ENCODE measurements at regions of chr10 and their contacts with region 1.

Region 1: DNA sequence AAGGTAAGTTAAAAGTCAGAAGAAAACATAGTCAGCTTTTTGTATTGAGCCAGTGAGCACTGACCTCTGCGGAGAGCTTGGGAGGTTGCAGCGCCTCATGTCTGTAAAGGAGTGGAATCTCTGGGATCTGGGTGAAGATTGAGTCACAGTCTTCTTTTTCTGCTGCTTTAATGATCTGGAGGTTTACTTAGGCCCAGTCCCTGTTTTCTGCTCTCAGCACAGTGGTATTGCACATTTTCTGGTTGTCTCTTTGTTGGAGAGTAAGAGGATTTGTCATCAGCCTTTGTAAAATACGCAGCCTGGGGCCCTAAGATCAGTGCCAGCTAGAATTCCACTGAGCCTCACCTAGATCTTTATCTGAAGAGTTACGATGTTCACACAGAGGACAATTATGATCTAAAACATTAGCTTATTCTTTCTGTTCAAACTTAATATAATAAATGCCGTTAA is 58.3 kb upstream of the GJD4 start:
- DNase-seq: peak; percentile 100
- ATAC-seq: peak; percentile 93
- H3K4me3 ChIP-seq: peak overlapping the region; percentile 31
- H3K27ac ChIP-seq: peak overlapping the region; percentile 86
- H3K4me1 ChIP-seq: peaks cover 42% of the 10 kb centered on the region
- H3K27me3 ChIP-seq: no peaks in the 10 kb centered on the region
- CTCF ChIP-seq: peak; percentile 78

Region 2: DNA sequence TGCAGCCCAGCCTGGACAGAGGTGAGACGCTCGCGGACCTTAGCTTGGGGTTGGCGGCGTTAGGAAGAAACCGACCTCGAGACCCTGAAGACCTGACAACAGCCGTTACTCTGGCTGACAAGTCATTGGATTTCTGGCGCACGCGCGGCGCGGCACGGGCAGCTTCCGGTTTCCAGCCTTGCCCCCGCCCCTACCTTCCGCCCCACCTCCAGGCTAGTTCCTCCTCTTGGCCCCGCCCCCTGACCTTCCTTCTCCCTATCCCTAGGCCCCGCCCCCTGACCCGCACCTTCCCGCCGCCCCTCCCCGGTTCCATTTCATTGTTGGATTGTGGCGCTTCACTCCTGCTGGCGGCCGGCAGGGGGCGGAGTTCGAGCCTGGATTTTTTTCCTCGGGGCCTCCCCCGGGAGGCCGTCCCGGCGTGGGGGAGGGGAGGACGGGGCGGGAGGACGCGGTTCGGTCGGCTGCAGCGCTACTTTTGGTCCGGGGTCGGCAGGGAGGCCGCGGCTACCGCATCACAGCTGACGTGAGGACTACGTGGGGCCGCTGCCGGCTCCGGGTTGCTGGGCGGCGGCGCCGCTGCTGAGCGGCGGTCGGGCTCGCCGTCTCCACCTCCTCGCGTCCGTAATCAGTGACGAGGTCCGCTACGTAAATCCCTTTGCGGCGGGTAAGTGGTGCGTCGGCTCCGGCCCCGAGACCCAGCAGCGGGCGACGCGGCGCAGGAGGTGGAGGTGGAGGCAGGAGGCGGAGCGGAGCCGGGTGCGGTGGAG is 420.1 kb before region 1 on chr10 and contains the start of gene CREM:
- CTCF ChIA-PET with region 1: interaction called, 5 read pairs
- POLR2A ChIA-PET with region 1: no interaction called
- intact Hi-C with region 1: loop called (anchors 5 kb)
- DNase-seq: peak; percentile 100
- ATAC-seq: peak; percentile 80
- H3K4me3 ChIP-seq: peak within 1 kb of the TSS; percentile 74
- H3K27ac ChIP-seq: peak within 1 kb of the TSS; percentile 87
- H3K4me1 ChIP-seq: peaks cover 41% of the 10 kb centered on the region
- H3K27me3 ChIP-seq: no peaks in the 10 kb centered on the region
- CTCF ChIP-seq: peak; percentile 99
- total RNA-seq, gene CREM: 150 and 195 TPM in 2 replicates

Region 3: DNA sequence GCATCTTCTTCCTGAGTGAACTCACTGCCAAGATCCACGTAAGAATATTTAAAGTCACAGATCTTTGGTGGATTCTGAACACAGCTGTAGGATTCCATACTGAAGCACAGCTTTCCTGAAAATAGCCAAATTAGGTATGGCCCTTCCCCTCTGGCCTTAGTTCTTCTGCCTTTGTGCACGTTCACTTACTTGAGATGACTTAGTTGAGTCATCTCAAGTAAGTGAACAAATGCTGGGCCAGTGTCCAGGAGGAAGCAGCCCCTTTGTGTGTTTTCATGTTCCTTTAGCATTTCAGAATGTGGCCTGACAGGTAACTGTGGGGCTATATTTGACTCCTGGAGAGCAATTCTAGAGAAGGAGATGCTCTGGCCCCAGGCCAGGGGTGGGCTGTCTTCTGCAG is 159.1 kb before region 1 on chr10:
- CTCF ChIA-PET with region 1: no interaction called
- POLR2A ChIA-PET with region 1: no interaction called
- intact Hi-C with region 1: loop called (anchors 1 kb)
- DNase-seq: peak; percentile 100
- ATAC-seq: peak; percentile 87
- H3K4me3 ChIP-seq: no peak overlapping the region
- H3K27ac ChIP-seq: peak overlapping the region; percentile 3
- H3K4me1 ChIP-seq: peaks cover 42% of the 10 kb centered on the region
- H3K27me3 ChIP-seq: no peaks in the 10 kb centered on the region
- CTCF ChIP-seq: no peak

Region 4: GRCh38 chr10:35447693-35448407 is 99.0 kb before region 1 on chr10:
- CTCF ChIA-PET with region 1: no interaction called
- POLR2A ChIA-PET with region 1: no interaction called
- intact Hi-C with region 1: loop called (anchors 1 kb)
- DNase-seq: peak; percentile 91
- ATAC-seq: peak; percentile 77
- H3K4me3 ChIP-seq: peak overlapping the region; percentile 13
- H3K27ac ChIP-seq: peak overlapping the region; percentile 23
- H3K4me1 ChIP-seq: peaks cover 24% of the 10 kb centered on the region
- H3K27me3 ChIP-seq: no peaks in the 10 kb centered on the region
- CTCF ChIP-seq: no peak

Region 5: DNA sequence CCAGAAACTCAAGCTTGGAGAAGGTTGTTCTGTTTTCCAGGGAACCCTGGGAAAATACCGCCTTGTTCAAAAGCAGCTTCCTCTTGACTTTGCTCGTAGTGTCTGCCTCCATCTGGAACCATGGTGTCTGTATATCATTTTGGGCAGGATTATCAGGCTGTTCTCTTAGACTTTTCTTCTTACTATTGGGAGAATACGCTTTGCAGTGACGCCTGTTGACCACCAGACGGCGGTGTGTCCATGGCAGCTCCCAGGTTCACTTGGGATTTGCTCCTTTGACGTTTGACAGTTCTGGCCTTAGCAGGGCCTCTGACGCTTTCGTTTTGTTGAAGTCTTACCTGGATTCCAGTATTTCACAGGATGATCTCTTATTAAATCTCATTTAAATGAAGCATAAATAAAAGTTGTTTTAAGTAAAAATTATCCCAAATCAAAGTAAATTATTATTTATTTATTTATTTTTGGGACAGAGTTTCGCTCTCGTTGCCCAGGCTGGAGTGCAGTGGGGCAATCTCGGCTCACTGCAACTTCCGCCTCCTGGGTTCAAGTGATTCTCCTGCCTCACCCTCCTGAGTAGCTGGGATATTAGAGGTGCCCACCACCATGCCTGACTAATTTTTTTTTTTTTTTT is 16.5 kb after region 1 on chr10:
- CTCF ChIA-PET with region 1: interaction called, 15 read pairs
- POLR2A ChIA-PET with region 1: interaction called, 3 read pairs
- intact Hi-C with region 1: loop called (anchors 1 kb)
- DNase-seq: peak; percentile 98
- ATAC-seq: peak; percentile 85
- H3K4me3 ChIP-seq: no peak overlapping the region
- H3K27ac ChIP-seq: no peak overlapping the region
- H3K4me1 ChIP-seq: 0 out of 2 replicates have a peak, but pooled peaks cover 2% of the 10 kb centered on the region
- H3K27me3 ChIP-seq: no peaks in the 10 kb centered on the region
- CTCF ChIP-seq: peak; percentile 100

Measured in PC-3 (cell line).